GM10248 (cell line): ENCODE measurements at regions of chr5 and their contacts with region 1.

Region 1: DNA sequence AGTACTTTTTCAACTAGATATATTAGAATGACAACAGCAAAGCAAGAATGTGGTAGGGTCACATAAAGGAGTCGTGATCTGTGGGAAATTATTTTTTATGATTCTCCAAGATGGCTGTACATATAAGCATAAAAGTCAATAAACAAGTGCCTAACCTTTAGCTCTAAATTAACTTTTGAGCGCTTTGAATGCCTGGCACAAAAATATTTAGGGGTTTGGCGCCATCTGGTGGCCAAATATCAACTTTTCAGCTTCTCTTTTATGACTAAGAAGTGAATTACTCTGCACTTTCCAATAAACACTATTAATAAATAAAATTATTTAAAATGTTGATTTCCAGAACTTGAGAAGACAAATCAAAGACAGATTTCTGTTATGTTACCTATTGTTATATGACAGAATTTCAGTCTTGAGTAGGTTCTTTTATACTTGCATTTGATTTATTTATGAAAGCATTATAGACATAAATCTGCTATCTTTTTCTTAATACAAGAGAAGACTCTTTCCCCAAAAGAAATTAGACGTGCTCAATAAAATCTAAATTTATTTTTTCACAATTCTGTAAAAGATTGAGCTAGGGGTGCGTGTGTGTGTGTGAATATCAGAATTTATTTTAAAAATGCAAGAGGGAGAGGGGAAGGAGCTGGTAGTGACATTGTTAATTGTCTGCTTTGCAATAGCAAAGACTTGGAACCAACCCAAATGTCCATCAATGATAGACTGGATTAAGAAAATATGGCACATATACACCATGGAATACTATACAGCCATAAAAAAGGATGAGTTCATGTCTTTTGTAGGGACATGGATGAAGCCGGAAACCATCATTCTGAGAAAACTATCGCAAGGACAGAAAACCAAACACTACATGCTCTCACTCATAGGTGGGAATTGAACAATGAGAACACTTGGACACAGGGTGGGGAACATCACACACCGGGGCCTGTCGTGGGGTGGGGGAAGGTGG is 36.7 kb upstream of the ARRDC3 start:
- DNase-seq: peak; percentile 27
- CTCF ChIP-seq: peak; percentile 55

Region 2: GRCh38 chr5:90802474-90803317 is 617.2 kb before region 1 on chr5:
- CTCF ChIA-PET with region 1: interaction called, 10 read pairs
- POLR2A ChIA-PET with region 1: no interaction called
- DNase-seq: peak; percentile 42
- CTCF ChIP-seq: peak; percentile 80

Region 3: DNA sequence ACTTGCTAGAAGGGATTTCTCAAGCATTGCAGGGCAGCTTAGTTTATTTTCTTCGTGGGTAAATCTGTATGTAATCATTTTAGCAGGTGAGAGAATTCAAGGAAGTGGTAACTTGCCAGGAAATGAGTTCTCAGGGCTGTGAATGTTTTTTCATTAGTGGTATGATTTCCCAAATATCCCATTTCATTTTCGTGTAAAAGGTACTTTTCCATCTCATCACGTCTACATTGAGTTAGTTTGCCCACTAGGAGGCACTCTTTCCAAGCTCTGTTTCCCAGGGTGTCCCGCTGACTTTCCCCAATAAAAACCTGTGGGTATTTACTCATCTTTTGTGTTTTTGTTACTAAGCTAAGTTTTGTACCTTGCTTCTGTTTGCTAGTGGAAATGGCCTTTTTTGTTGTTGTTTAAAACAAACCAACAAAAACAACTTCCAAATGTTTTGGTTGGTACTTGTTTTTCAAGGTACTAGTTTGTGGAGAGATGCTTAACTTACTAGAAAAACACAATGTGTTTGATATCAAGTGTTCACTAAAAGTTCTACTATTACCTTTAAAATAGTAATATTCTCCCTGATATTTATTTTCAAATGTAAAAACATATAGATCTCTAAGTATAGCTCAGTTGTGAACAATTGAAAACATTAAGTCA is 487.7 kb before region 1 on chr5:
- CTCF ChIA-PET with region 1: interaction called, 54 read pairs
- POLR2A ChIA-PET with region 1: no interaction called
- DNase-seq: peak; percentile 56
- CTCF ChIP-seq: peak; percentile 76

Region 4: DNA sequence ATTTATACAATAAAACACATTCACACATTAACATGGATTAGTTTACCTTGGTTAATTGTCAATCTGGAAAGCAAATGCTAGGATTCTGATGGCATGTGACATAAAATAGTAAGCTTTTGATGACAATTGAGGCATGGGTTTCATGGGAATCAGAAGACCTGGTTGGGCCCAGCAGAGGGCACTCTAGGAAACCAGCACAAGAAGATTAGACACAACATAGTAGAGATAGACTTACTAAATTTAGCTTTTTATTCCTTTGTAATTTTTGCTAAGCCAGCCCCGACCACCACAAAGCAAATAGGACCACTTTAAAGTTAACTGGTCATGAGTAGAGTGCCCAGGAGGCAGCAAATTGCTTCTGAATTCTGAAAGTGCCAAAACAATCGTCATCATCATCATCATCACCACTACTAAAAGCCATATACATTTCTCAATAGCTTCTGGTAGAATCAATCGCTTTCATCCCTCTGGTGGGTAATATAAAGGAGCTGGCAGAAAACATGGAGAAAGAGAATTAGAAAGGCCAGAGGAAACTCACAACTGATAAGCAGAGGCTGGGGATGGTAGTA is 200.0 kb before region 1 on chr5:
- CTCF ChIA-PET with region 1: interaction called, 14 read pairs
- POLR2A ChIA-PET with region 1: no interaction called
- DNase-seq: peak; percentile 32
- CTCF ChIP-seq: peak; percentile 25

Region 5: DNA sequence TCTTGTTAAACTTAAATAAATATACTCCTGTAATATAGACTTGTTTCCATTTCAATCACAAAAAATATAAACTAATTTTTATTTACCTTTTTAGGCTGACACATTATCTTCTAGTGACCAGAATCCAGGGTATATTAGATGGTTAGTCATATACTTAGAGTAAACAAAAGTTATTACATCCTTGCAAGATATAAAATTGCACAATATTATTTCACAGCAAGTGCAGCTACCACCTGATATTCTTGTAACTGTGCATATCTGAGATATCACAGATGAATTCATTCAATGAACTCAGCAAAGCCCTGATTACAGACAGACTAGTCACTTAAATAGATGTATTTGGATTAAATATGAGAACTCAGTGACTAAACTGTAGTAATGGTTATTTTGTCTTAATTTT is 11.1 kb before region 1 on chr5:
- CTCF ChIA-PET with region 1: interaction called, 28 read pairs
- POLR2A ChIA-PET with region 1: no interaction called
- DNase-seq: no peak
- CTCF ChIP-seq: no peak

Region 6: GRCh38 chr5:91535499-91535898 is 115.6 kb after region 1 on chr5:
- CTCF ChIA-PET with region 1: no interaction called
- POLR2A ChIA-PET with region 1: no interaction called
- DNase-seq: no peak
- CTCF ChIP-seq: no peak